CD4-positive, alpha-beta memory T cell (primary cell): ENCODE measurements at regions of chr4 and their contacts with region 1.

Region 1: GRCh38 chr4:98143001-98143899 is at the start of gene STPG2:
- DNase-seq: peak; percentile 91 to 92 (median 92)
- H3K4me3 ChIP-seq: peak within 1 kb of the TSS; percentile 67 to 69
- H3K4me3 Mint-ChIP-seq: peak within 1 kb of the TSS; percentile 88 to 96 (median 93)
- H3K27ac ChIP-seq: peak within 1 kb of the TSS; percentile 74
- H3K27ac Mint-ChIP-seq: peak within 1 kb of the TSS; percentile 97 to 98 (median 97)
- H3K4me1 ChIP-seq: peaks cover 23% of the 10 kb centered on the region
- H3K4me1 Mint-ChIP-seq: peaks cover 16 to 35% (median 23%) of the 10 kb centered on the region in 4 donors
- H3K27me3 ChIP-seq: no peaks in the 10 kb centered on the region
- H3K27me3 Mint-ChIP-seq: no peaks in the 10 kb centered on the region
- total RNA-seq, gene STPG2: 0.47 to 0.84 TPM

Region 2: DNA sequence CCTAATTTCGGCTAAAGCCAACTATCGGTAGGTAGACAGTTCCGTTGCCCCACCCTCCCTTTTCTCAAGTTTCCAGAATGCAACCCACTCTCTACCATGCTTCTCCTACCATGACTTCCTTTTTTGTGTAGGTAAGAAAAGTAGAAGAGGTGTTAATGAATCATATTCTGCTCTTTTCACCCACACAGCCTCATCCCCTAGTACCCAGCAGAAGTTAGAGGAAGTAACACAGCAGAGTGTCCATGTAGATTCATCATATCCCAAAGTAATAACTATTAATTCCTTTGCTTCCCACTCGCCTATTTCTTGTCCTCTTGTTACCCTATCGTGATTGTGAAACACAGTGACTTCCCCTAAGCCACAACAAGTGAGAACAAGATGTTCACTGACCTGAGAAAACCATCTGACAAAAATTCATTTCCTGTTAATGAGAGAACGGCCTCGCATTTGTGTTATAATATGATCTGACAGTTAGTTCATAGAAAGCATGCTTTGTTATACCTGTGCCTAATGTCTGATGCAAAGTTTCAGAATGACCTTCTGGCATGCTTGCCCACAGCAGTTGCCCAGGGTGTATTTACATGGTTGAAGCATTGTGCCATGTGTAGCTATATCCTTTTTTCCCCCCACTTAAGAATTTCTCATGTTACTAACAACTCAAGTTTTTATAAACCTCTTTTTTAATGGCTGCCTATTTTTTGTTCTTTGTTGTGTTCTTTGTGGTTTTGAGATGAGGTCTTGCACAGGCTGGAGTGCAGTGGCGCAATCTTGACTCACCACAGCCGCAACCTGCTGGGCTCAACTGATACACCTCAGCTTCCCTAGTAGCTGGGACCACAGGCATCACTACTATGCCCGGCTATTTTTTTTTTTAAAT is 303.5 kb after region 1 on chr4:
- CTCF ChIA-PET with region 1: interaction called, 4 read pairs
- POLR2A ChIA-PET with region 1: interaction called, 3 read pairs
- intact Hi-C with region 1: loop called (anchors 2 kb)
- DNase-seq: peak; percentile 74 to 78 (median 77)
- H3K4me3 ChIP-seq: peak overlapping the region in 1 of 2 donors; percentile 3
- H3K4me3 Mint-ChIP-seq: peak overlapping the region; percentile 61 to 88 (median 78)
- H3K27ac ChIP-seq: peak overlapping the region; percentile 37
- H3K27ac Mint-ChIP-seq: peak overlapping the region; percentile 76 to 93 (median 91)
- H3K4me1 ChIP-seq: peaks cover 48% of the 10 kb centered on the region
- H3K4me1 Mint-ChIP-seq: peaks cover 37 to 47% (median 40%) of the 10 kb centered on the region in 4 donors
- H3K27me3 ChIP-seq: no peaks in the 10 kb centered on the region
- H3K27me3 Mint-ChIP-seq: no peaks in the 10 kb centered on the region

Region 3: GRCh38 chr4:98928505-98929340 is 785.5 kb after region 1 on chr4 and contains the start of gene EIF4E:
- CTCF ChIA-PET with region 1: interaction called, 11 read pairs
- POLR2A ChIA-PET with region 1: interaction called, 22 read pairs
- intact Hi-C with region 1: loop called (anchors 1 kb)
- DNase-seq: peak; percentile 97 to 99 (median 98)
- H3K4me3 ChIP-seq: peak within 1 kb of the TSS; percentile 66 to 97
- H3K4me3 Mint-ChIP-seq: peak within 1 kb of the TSS; percentile 92 to 100 (median 98)
- H3K27ac ChIP-seq: peak within 1 kb of the TSS; percentile 82
- H3K27ac Mint-ChIP-seq: peak within 1 kb of the TSS; percentile 94 to 99 (median 98)
- H3K4me1 ChIP-seq: peaks cover 33% of the 10 kb centered on the region
- H3K4me1 Mint-ChIP-seq: peaks cover 17 to 58% (median 30%) of the 10 kb centered on the region in 4 donors
- H3K27me3 ChIP-seq: no peaks in the 10 kb centered on the region
- H3K27me3 Mint-ChIP-seq: peaks cover 0 to 2% of the 10 kb centered on the region in 2 donors
- total RNA-seq, gene EIF4E: 58.2 to 62.5 TPM

Region 4: GRCh38 chr4:99088481-99089365 is 945.5 kb after region 1 on chr4 and contains the start of gene ADH5:
- CTCF ChIA-PET with region 1: interaction called, 3 read pairs
- POLR2A ChIA-PET with region 1: interaction called, 21 read pairs
- intact Hi-C with region 1: loop called (anchors 1 kb)
- DNase-seq: peak; percentile 83 to 90 (median 86)
- H3K4me3 ChIP-seq: peak within 1 kb of the TSS; percentile 73 to 99
- H3K4me3 Mint-ChIP-seq: peak within 1 kb of the TSS; percentile 92 to 99 (median 98)
- H3K27ac ChIP-seq: peak within 1 kb of the TSS; percentile 77
- H3K27ac Mint-ChIP-seq: peak within 1 kb of the TSS; percentile 89 to 99 (median 98)
- H3K4me1 ChIP-seq: peaks cover 39% of the 10 kb centered on the region
- H3K4me1 Mint-ChIP-seq: peaks cover 35 to 71% (median 54%) of the 10 kb centered on the region in 4 donors
- H3K27me3 ChIP-seq: no peaks in the 10 kb centered on the region
- H3K27me3 Mint-ChIP-seq: no peaks in the 10 kb centered on the region
- total RNA-seq, gene ADH5: 75.6 to 80.5 TPM

Region 5: GRCh38 chr4:99405433-99406115 is 1262.3 kb after region 1 on chr4:
- CTCF ChIA-PET with region 1: interaction called, 3 read pairs
- POLR2A ChIA-PET with region 1: no interaction called
- intact Hi-C with region 1: loop called (anchors 1 kb)
- DNase-seq: peak; percentile 43 to 60 (median 49)
- H3K4me3 ChIP-seq: no peak overlapping the region
- H3K4me3 Mint-ChIP-seq: no peak overlapping the region
- H3K27ac ChIP-seq: no peak overlapping the region
- H3K27ac Mint-ChIP-seq: no peak overlapping the region
- H3K4me1 ChIP-seq: no peaks in the 10 kb centered on the region
- H3K4me1 Mint-ChIP-seq: peaks cover 0 to 4% (median 2%) of the 10 kb centered on the region in 4 donors
- H3K27me3 ChIP-seq: no peaks in the 10 kb centered on the region
- H3K27me3 Mint-ChIP-seq: peaks cover 0 to 1% of the 10 kb centered on the region in 2 donors

Region 6: GRCh38 chr4:99462875-99463464 is 1319.7 kb after region 1 on chr4:
- CTCF ChIA-PET with region 1: no interaction called
- POLR2A ChIA-PET with region 1: no interaction called
- intact Hi-C with region 1: loop called (anchors 10 kb)
- DNase-seq: peak; percentile 36 to 52 (median 44)
- H3K4me3 ChIP-seq: no peak overlapping the region
- H3K4me3 Mint-ChIP-seq: no peak overlapping the region
- H3K27ac ChIP-seq: no peak overlapping the region
- H3K27ac Mint-ChIP-seq: peak overlapping the region in 1 of 7 donors; percentile 10
- H3K4me1 ChIP-seq: no peaks in the 10 kb centered on the region
- H3K4me1 Mint-ChIP-seq: no peaks in the 10 kb centered on the region
- H3K27me3 ChIP-seq: no peaks in the 10 kb centered on the region
- H3K27me3 Mint-ChIP-seq: peaks cover 13 to 18% of the 10 kb centered on the region in 2 donors

Region 7: GRCh38 chr4:99816545-99817308 is 1673.5 kb after region 1 on chr4 and contains the start of gene DAPP1:
- CTCF ChIA-PET with region 1: interaction called, 3 read pairs
- POLR2A ChIA-PET with region 1: interaction called, 4 read pairs
- intact Hi-C with region 1: loop called (anchors 5 kb)
- DNase-seq: peak; percentile 82 to 93 (median 87)
- H3K4me3 ChIP-seq: peak within 1 kb of the TSS; percentile 55 to 92
- H3K4me3 Mint-ChIP-seq: peak within 1 kb of the TSS; percentile 89 to 95 (median 91)
- H3K27ac ChIP-seq: peak within 1 kb of the TSS; percentile 69
- H3K27ac Mint-ChIP-seq: peak within 1 kb of the TSS; percentile 91 to 98 (median 97)
- H3K4me1 ChIP-seq: peaks cover 63% of the 10 kb centered on the region
- H3K4me1 Mint-ChIP-seq: peaks cover 44 to 61% (median 54%) of the 10 kb centered on the region in 4 donors
- H3K27me3 ChIP-seq: no peaks in the 10 kb centered on the region
- H3K27me3 Mint-ChIP-seq: no peaks in the 10 kb centered on the region
- total RNA-seq, gene DAPP1: 21.3 to 23.0 TPM